ENCODE measurements at regions of chr20 and their contacts with region 1.

Region 1: DNA sequence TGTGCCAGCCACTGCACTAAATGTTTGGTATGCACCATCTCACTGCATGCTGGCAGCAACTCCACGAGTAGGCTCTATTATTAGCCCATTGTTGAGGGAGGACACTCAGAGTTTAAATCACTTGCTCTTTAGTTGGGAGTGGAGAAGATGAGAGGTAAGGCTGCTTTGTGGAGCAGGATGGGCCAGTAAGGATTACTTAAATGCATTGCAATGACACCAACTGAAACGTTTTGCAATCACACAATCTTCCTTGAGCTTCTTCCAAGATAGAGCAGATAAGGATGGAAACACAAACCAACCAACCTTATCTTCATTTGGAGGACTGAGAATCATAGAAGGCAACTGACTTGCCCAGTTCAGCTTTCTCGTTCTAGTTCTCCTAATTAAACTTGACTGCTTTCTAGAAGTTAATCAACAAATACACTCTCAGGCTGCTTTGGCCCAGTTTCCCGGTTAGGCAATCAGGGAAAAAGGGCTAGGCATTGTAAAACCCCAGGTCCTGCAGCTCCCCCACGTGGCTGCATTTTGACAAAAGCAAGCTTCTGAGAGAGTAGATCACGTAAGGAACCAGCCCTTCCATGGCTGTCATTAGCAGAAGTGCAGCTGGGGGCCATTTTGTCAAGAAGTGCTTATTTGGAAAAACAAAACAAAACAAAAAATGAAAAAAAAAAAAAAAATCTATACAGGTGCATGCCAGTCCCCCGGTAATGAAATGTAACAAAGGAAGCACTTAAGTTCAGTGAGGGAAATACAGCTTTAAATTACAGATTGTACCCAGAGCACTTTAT is 130.6 kb downstream of the BCAS1 start:
- DNase-seq: peak; percentile 93
- ATAC-seq: peak; percentile 81
- H3K4me3 ChIP-seq: 0 out of 2 replicates have a peak overlapping the region, but pooled peaks have one; percentile 63
- H3K27ac ChIP-seq: peak overlapping the region; percentile 84
- H3K4me1 ChIP-seq: peaks cover 54% of the 10 kb centered on the region
- H3K27me3 ChIP-seq: no peaks in the 10 kb centered on the region
- CTCF ChIP-seq: peak; percentile 70 to 96 (median 83)
- EP300 ChIP-seq: 0 out of 4 replicates have a peak, but pooled peaks of 1 of the 2 experiments have one; percentile 10
- POLR2A ChIP-seq: no peak
- RAD21 ChIP-seq: peak; percentile 98

Region 2: DNA sequence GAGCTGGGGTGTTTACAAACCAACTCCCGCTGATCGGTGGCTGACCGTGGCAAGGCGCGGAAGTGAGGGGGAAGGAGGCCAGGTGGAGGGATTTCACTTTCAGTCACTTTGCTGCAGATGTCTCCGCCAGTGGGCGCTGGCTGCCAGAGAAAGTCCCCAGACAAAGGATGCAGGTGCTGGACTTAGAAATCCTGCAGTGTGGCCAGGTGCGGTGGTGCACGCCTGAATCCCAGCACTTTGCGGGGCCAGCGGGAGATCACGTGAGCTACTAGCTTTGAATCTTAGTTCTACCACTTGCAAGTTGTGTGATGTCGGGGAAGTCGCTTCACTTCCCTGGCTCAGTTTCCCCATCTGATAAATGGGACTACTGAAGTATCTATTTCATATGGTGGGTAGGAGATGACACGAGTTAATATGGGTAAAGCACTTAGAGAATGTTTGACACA is 526.6 kb before region 1 on chr20:
- CTCF ChIA-PET with region 1: interaction called, 18 read pairs
- POLR2A ChIA-PET with region 1: no interaction called
- RAD21 ChIA-PET with region 1: interaction called, 24 read pairs
- SMC1A ChIA-PET with region 1: interaction called, 15 read pairs
- in situ Hi-C with region 1: loop called (anchors 5 kb)
- intact Hi-C with region 1: loop called (anchors 2 kb)
- DNase-seq: peak; percentile 52
- ATAC-seq: peak; percentile 98
- H3K4me3 ChIP-seq: no peak overlapping the region
- H3K27ac ChIP-seq: no peak overlapping the region
- H3K4me1 ChIP-seq: peaks cover 2% of the 10 kb centered on the region; the same call in 1 of the 2 replicates
- H3K27me3 ChIP-seq: no peaks in the 10 kb centered on the region
- CTCF ChIP-seq: peak; percentile 87 to 96 (median 90)
- EP300 ChIP-seq: peak in 1 of 2 experiments; percentile 40; a peak in 1 of 4 replicates
- POLR2A ChIP-seq: no peak
- RAD21 ChIP-seq: peak; percentile 93

Region 3: DNA sequence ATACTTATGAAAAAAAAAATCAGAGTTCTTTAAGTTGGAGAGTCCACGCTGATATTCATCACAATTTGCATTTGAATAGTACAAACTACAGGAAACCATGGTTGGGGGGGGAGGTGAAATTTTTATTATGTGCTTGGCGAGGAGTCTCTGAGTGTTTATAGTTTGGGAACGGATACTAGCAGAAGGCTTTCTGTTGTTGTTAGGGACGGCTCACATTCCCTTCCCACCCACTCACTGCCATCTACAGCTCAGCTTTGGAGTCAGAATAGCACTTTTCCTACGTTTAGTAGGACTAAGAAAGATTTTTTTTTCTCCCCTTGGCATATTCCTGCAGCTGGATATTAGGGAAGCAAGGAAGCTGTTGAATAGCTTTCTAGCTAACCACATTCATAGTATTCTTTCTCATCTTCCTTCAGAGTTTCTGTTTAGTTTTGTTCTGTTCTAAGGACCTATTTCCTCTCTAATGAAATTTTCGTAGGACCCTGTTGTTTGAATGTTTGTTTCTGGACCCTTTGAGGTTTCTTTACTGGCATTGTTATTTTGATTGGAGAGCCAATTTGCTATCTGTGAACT is 111.0 kb before region 1 on chr20:
- CTCF ChIA-PET with region 1: interaction called, 3 read pairs
- POLR2A ChIA-PET with region 1: no interaction called
- RAD21 ChIA-PET with region 1: interaction called, 8 read pairs
- SMC1A ChIA-PET with region 1: interaction called, 14 read pairs
- in situ Hi-C with region 1: no loop called
- intact Hi-C with region 1: no loop called
- DNase-seq: no peak
- ATAC-seq: peak; percentile 2; the same call in 2 of the 3 replicates
- H3K4me3 ChIP-seq: peak overlapping the region; percentile 56
- H3K27ac ChIP-seq: peak overlapping the region; percentile 91
- H3K4me1 ChIP-seq: peaks cover 37% of the 10 kb centered on the region
- H3K27me3 ChIP-seq: no peaks in the 10 kb centered on the region
- CTCF ChIP-seq: 0 out of 6 replicates have a peak, but pooled peaks of 1 of the 3 experiments have one; percentile 4
- EP300 ChIP-seq: no peak
- POLR2A ChIP-seq: no peak
- RAD21 ChIP-seq: 0 out of 2 replicates have a peak, but pooled peaks have one; percentile 1

Region 4: GRCh38 chr20:53899351-53900167 is 40.2 kb before region 1 on chr20:
- CTCF ChIA-PET with region 1: interaction called, 24 read pairs
- POLR2A ChIA-PET with region 1: interaction called, 4 read pairs
- RAD21 ChIA-PET with region 1: interaction called, 25 read pairs
- SMC1A ChIA-PET with region 1: interaction called, 49 read pairs
- in situ Hi-C with region 1: no loop called
- intact Hi-C with region 1: no loop called
- DNase-seq: peak; percentile 95
- ATAC-seq: peak; percentile 88
- H3K4me3 ChIP-seq: no peak overlapping the region
- H3K27ac ChIP-seq: peak overlapping the region; percentile 62
- H3K4me1 ChIP-seq: peaks cover 39% of the 10 kb centered on the region
- H3K27me3 ChIP-seq: no peaks in the 10 kb centered on the region
- CTCF ChIP-seq: no peak
- EP300 ChIP-seq: peak in 1 of 2 experiments; percentile 74; a peak in 2 of 4 replicates
- POLR2A ChIP-seq: no peak
- RAD21 ChIP-seq: no peak

Region 5: GRCh38 chr20:53926428-53927028 is 13.2 kb before region 1 on chr20:
- CTCF ChIA-PET with region 1: interaction called, 109 read pairs
- POLR2A ChIA-PET with region 1: interaction called, 29 read pairs
- RAD21 ChIA-PET with region 1: interaction called, 394 read pairs
- SMC1A ChIA-PET with region 1: interaction called, 85 read pairs
- in situ Hi-C with region 1: no loop called
- intact Hi-C with region 1: no loop called
- DNase-seq: peak; percentile 99
- ATAC-seq: peak; percentile 80
- H3K4me3 ChIP-seq: peak overlapping the region; percentile 52
- H3K27ac ChIP-seq: peak overlapping the region; percentile 85
- H3K4me1 ChIP-seq: peaks cover 87% of the 10 kb centered on the region
- H3K27me3 ChIP-seq: no peaks in the 10 kb centered on the region
- CTCF ChIP-seq: no peak
- EP300 ChIP-seq: peak; percentile 80 to 82
- POLR2A ChIP-seq: peak; percentile 67
- RAD21 ChIP-seq: no peak